ENCODE measurements at regions of chr14 and their contacts with region 1.

Region 1: DNA sequence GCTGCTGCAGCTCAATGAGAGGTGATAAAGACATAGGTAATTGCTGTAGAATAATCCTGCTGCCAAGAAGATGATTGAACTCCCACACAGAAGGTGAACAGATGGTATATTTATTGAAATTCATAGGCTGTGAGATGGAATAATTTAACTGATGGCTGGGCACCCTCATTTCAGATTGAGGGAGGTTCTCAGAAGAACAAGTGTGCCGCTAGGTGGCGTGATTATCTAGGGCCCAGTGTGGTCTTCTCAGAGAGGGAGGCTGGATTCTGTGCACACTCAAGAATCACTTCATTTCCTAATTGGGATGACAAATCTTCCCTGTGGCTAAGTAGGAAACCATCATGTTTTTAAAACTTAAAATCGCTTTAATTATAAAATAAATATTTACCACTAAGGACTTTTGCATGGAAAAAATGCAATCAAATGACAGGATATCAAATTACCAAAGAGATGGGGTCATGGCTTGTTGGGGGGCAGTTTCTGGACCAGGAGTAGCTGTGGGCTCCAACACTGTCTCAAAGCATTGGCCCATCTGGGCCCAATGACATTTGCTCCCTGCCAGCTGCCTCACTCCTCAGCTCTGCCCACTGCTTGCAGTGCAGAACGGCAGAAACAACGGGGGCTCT is 132.3 kb downstream of the SNAPC1 start:
- DNase-seq: peak; percentile 66
- CTCF ChIP-seq: peak; percentile 79

Region 2: DNA sequence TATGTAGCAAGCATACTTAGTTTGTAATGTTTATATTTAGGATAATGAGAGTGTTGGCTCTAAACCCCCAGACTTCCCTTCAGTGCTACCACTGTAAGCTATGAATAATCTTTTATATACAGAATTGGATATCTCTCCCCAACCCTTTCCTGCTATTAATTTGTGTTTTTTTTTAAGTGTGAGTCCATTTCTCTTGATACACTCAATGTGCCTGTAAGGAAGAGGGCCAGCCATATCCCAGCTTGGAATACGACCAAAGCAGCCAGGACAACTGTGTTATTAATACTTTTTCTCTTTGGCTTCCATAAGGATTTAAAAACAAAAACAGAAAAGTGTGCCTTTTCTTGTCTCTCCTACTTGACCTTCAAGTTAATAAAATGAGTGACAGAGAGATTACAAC is 15.6 kb before region 1 on chr14:
- CTCF ChIA-PET with region 1: interaction called, 12 read pairs
- POLR2A ChIA-PET with region 1: no interaction called
- DNase-seq: no peak
- CTCF ChIP-seq: no peak

Measured in GM10248 (cell line).